ENCODE measurements at regions of chr16 and their contacts with region 1.

Region 1: DNA sequence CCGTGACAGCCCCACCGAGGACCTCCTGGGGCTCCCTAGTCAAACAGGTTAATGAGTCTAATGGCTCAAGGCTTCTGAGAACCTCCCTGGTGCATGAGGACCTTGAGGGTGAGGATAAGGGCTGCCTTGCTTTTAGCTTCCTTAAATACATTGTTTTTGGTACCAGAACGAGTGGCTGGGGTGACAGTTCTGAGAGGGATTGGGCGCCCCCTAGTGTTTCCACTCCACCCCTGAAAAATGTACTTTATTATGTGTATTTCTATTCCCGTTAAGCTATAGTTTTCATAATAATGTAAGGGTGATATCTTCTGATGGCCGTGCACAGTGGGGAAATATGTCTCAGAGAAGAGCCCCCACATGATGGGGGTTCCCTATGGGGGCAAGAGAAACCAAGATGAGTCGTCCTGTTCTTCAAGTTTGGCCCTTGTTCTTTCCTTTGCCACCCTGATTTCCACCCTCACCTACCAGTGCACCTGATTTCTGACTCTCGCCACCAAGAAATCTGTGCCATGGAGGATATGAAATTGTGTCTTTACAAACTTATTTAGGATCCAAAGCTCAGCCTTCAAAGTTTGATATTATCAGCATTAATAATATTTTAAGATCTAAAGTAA is 14.5 kb upstream of the VWA3A start:
- DNase-seq: peak; percentile 56 to 83 (median 65)
- ATAC-seq: peak; percentile 76
- H3K4me3 ChIP-seq: no peak overlapping the region
- H3K4me3 Mint-ChIP-seq: no peak overlapping the region
- H3K27ac ChIP-seq: no peak overlapping the region
- H3K27ac Mint-ChIP-seq: no peak overlapping the region
- H3K4me1 ChIP-seq: peaks cover 6% of the 10 kb centered on the region
- H3K4me1 Mint-ChIP-seq: peaks cover 14% of the 10 kb centered on the region
- H3K27me3 ChIP-seq: no peaks in the 10 kb centered on the region
- H3K27me3 Mint-ChIP-seq: no peaks in the 10 kb centered on the region
- CTCF ChIP-seq: peak; percentile 89

Region 2: DNA sequence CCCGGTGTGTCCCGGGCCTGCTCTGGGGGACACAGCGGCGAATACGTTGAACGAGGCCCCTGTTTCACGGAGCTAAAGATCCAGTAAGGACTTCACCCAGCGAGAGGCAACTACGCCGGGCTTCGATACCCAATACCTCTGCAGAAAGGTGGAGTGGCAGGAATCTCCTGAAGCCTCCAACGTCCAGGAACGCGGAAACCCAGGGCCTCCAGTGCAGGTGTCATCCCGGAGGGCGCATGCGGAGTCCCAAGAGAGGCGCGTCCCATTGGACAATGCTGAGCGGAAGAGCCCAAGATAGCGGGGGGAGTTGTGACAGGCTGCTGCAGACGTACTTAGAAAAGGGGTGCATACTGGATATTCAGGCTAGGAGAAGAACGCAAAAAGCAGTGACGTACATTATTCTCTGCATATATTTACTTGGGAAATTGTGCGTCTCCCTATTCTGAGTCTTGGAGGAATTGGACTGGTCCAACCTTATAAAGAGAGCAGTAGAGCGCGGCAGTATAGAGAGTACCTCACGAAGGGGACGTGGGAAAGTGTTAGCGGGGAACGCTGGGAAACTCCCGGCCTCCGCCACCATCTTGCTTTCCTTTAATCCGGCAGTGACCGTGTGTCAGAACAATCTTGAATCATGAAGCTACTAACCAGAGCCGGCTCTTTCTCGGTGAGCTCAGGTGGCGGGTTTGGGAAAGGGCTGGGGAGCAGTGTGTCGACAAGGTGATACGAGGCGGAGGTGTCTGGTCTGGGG is 124.8 kb before region 1 on chr16 and contains the start of gene UQCRC2:
- CTCF ChIA-PET with region 1: interaction called, 7 read pairs
- POLR2A ChIA-PET with region 1: no interaction called
- intact Hi-C with region 1: loop called in 1 of 2 experiments (anchors 5 kb)
- DNase-seq: peak; percentile 76 to 95 (median 82)
- ATAC-seq: peak; percentile 87
- H3K4me3 ChIP-seq: peak within 1 kb of the TSS; percentile 92
- H3K4me3 Mint-ChIP-seq: peak within 1 kb of the TSS; percentile 94
- H3K27ac ChIP-seq: peak within 1 kb of the TSS; percentile 93 to 96
- H3K27ac Mint-ChIP-seq: peak within 1 kb of the TSS; percentile 94
- H3K4me1 ChIP-seq: peaks cover 52% of the 10 kb centered on the region
- H3K4me1 Mint-ChIP-seq: peaks cover 62% of the 10 kb centered on the region
- H3K27me3 ChIP-seq: no peaks in the 10 kb centered on the region
- H3K27me3 Mint-ChIP-seq: no peaks in the 10 kb centered on the region
- CTCF ChIP-seq: no peak
- total RNA-seq, gene UQCRC2: 142 to 146 TPM

Region 3: GRCh38 chr16:22001591-22001990 is 76.2 kb before region 1 on chr16:
- CTCF ChIA-PET with region 1: interaction called, 59 read pairs
- POLR2A ChIA-PET with region 1: interaction called, 6 read pairs
- intact Hi-C with region 1: loop called (anchors 1 kb)
- DNase-seq: no peak
- ATAC-seq: no peak
- H3K4me3 ChIP-seq: no peak overlapping the region
- H3K4me3 Mint-ChIP-seq: no peak overlapping the region
- H3K27ac ChIP-seq: no peak overlapping the region
- H3K27ac Mint-ChIP-seq: no peak overlapping the region
- H3K4me1 ChIP-seq: peaks cover 9% of the 10 kb centered on the region
- H3K4me1 Mint-ChIP-seq: peaks cover 15% of the 10 kb centered on the region
- H3K27me3 ChIP-seq: no peaks in the 10 kb centered on the region
- H3K27me3 Mint-ChIP-seq: no peaks in the 10 kb centered on the region
- CTCF ChIP-seq: no peak

Region 4: DNA sequence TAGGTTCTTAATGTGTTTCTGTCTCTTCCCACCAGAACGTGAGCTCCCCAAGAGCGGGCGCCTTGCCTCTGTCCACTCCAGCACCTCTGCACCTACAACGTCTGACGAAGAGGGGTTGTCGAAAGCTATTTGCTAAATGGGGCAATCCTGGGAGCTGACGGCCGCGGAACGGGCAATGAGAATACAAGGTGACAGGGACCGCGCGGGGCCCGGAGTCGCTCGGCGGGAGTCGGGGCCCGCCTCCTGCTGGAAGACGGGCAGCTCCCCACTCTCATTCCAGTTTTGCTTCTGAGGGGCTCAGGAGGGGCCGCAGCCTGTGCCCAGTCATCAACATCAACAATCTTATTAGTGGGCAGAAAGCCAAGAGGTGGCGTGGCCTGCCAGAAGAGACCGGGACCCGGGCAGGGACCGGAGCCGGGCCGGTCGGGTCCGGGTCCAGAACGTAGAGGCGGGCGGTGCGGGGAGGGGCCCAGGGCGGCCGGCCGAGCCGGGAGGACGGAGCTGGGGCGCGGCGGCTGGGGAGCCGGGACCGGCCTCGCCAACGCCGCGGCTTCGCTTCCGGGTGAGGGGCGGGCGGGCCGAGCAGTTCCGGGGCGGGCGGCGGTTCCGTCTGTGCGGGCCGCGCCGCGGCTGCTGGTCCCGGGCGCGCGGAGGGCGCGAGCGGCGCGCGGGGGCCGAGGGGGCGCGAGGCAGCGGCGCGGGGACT is 70.1 kb before region 1 on chr16 and contains the start of gene MOSMO:
- CTCF ChIA-PET with region 1: interaction called, 59 read pairs
- POLR2A ChIA-PET with region 1: interaction called, 3 read pairs
- intact Hi-C with region 1: no loop called
- DNase-seq: peak; percentile 37 to 85 (median 66)
- ATAC-seq: peak; percentile 83
- H3K4me3 ChIP-seq: peak within 1 kb of the TSS; percentile 89
- H3K4me3 Mint-ChIP-seq: peak within 1 kb of the TSS; percentile 90
- H3K27ac ChIP-seq: peak within 1 kb of the TSS; percentile 37 to 47
- H3K27ac Mint-ChIP-seq: peak within 1 kb of the TSS; percentile 79
- H3K4me1 ChIP-seq: peaks cover 28% of the 10 kb centered on the region
- H3K4me1 Mint-ChIP-seq: peaks cover 51% of the 10 kb centered on the region
- H3K27me3 ChIP-seq: no peaks in the 10 kb centered on the region
- H3K27me3 Mint-ChIP-seq: no peaks in the 10 kb centered on the region
- CTCF ChIP-seq: no peak
- total RNA-seq, gene MOSMO: 2.3 to 2.8 TPM

Region 5: DNA sequence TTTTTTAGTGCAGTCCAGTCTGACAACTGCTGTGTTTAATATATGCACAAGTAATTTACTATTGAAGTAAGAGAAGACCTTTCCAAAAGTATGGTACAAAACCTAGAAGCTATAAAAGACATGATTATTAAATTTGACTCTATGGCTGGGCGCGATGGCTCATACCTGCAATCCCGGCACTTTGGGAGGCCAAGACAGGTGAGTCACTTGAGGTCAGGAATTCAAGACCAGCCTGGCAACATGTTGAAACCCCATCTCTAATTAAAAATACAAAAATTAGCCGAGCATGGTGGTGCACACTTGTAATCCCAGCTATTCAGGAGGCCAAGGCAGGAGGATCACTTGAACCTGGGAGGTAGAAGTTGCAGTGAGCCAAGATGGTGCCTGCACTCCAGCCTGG is 26.8 kb before region 1 on chr16:
- CTCF ChIA-PET with region 1: interaction called, 11 read pairs
- POLR2A ChIA-PET with region 1: interaction called, 3 read pairs
- intact Hi-C with region 1: no loop called
- DNase-seq: no peak
- ATAC-seq: no peak
- H3K4me3 ChIP-seq: no peak overlapping the region
- H3K4me3 Mint-ChIP-seq: no peak overlapping the region
- H3K27ac ChIP-seq: no peak overlapping the region
- H3K27ac Mint-ChIP-seq: no peak overlapping the region
- H3K4me1 ChIP-seq: no peaks in the 10 kb centered on the region
- H3K4me1 Mint-ChIP-seq: peaks cover 23% of the 10 kb centered on the region
- H3K27me3 ChIP-seq: no peaks in the 10 kb centered on the region
- H3K27me3 Mint-ChIP-seq: no peaks in the 10 kb centered on the region
- CTCF ChIP-seq: no peak

Region 6: GRCh38 chr16:22065252-22065651 is 12.6 kb before region 1 on chr16:
- CTCF ChIA-PET with region 1: interaction called, 14 read pairs
- POLR2A ChIA-PET with region 1: interaction called, 3 read pairs
- intact Hi-C with region 1: no loop called
- DNase-seq: no peak
- ATAC-seq: no peak
- H3K4me3 ChIP-seq: no peak overlapping the region
- H3K4me3 Mint-ChIP-seq: no peak overlapping the region
- H3K27ac ChIP-seq: no peak overlapping the region
- H3K27ac Mint-ChIP-seq: no peak overlapping the region
- H3K4me1 ChIP-seq: no peaks in the 10 kb centered on the region
- H3K4me1 Mint-ChIP-seq: peaks cover 8% of the 10 kb centered on the region
- H3K27me3 ChIP-seq: no peaks in the 10 kb centered on the region
- H3K27me3 Mint-ChIP-seq: no peaks in the 10 kb centered on the region
- CTCF ChIP-seq: no peak

Measured in CD4-positive, alpha-beta T cell (primary cell).